ENCODE measurements at regions of chr5 and their contacts with region 1.

Region 1: GRCh38 chr5:179195561-179196404 is 135.6 kb downstream of the ZNF354C start:
- DNase-seq: no peak
- H3K4me3 ChIP-seq: no peak overlapping the region
- H3K27ac ChIP-seq: peak overlapping the region in 1 of 2 donors; percentile 32
- H3K4me1 ChIP-seq: no peaks in the 10 kb centered on the region
- H3K27me3 ChIP-seq: no peaks in the 10 kb centered on the region
- CTCF ChIP-seq: no peak
- POLR2A ChIP-seq: no peak

Region 2: DNA sequence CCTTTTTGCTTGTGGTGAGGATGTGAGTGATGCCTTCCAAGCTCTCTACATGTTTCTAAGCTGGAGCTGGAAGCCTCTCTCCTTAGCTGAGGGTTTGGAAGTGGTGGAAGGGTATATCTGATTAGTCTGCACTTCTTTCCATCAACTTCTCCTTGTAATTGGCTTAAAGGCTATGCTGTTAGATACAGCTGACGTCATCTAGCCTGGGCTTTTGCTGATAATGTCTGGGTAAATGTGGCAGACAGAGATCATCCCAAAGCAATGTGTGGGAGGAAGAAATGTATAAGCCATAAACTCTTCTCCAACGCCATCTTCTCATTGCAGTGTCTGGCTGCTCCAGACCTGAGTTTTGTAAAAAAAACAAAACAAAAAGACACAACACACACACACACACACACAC is 106.3 kb before region 1 on chr5:
- intact Hi-C with region 1: no loop called
- DNase-seq: no peak
- H3K4me3 ChIP-seq: no peak overlapping the region
- H3K27ac ChIP-seq: no peak overlapping the region
- H3K4me1 ChIP-seq: no peaks in the 10 kb centered on the region
- H3K27me3 ChIP-seq: no peaks in the 10 kb centered on the region
- CTCF ChIP-seq: no peak
- POLR2A ChIP-seq: no peak

Region 3: GRCh38 chr5:179355976-179356974 is 160.5 kb after region 1 on chr5:
- intact Hi-C with region 1: loop called (anchors 10 kb)
- DNase-seq: no peak
- H3K4me3 ChIP-seq: no peak overlapping the region
- H3K27ac ChIP-seq: peak overlapping the region in 1 of 2 donors; percentile 48
- H3K4me1 ChIP-seq: no peaks in the 10 kb centered on the region
- H3K27me3 ChIP-seq: no peaks in the 10 kb centered on the region
- CTCF ChIP-seq: no peak
- POLR2A ChIP-seq: no peak